Lower leg skin (tissue), 4 donors: ENCODE measurements at regions of chr1 and their contacts with region 1.

Region 1: GRCh38 chr1:202184750-202185460 is 8.7 kb upstream of the LGR6 start:
- DNase-seq: peak; percentile 62 to 93
- H3K4me3 ChIP-seq: no peak overlapping the region
- CTCF ChIP-seq: no peak
- POLR2A ChIP-seq: no peak

Region 2: GRCh38 chr1:202315576-202316168 is 130.8 kb after region 1 on chr1:
- intact Hi-C with region 1: loop called (anchors 5 kb)
- DNase-seq: peak; percentile 49 to 93
- H3K4me3 ChIP-seq: no peak overlapping the region
- CTCF ChIP-seq: peak in 1 of 3 donors; percentile 81
- POLR2A ChIP-seq: no peak

Region 3: DNA sequence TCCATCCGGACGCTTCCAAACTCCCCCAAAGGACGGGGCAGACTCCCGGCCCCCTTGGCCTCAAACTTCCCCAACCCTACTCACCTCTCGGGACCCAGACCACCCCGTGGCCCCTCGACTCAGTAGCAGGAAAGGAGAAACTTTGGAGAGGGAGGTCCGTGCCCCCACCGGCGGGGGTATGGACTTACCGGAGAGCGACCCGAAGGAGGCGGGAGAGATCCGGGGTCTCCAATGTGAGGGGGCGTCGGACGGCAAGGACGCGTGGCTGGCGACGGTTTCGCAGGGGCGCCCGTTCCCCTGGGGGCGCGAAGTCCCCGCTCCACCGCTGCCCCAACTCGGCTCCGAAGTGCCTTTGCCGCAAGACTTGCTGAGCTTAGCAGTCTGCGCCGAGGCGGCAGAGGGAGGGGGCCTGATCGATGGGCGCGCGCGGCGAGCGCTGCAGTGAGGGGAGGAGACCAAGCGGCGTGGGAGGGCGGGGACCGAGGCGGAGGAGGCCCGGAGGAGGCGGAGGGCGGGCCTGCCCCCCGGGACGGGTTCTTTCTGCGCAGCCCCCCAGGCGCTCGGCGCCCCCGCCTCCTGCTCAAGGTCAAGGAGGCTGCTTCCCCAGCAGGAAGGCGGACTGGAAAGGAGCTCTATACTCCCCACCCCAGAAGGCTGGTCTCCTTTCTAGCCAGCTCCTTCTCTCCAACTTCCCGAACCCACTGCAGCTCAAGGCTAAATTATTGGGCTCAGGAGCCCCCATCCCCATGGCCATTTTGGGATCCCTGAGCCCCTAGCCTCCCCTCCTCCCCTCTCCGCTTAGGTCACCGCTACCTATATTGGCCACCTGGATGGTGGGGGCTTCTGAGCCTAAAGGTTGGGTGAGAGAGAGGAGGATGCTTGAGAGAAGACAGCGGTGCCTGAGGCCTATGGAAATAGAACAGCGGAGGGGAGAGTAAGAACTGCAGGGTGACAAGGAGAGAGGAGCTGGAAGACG is 525.5 kb after region 1 on chr1 and contains the start of gene SYT2:
- intact Hi-C with region 1: loop called (anchors 10 kb)
- DNase-seq: peak in 1 of 2 donors; percentile 82
- H3K4me3 ChIP-seq: no peak within 1 kb of the TSS
- CTCF ChIP-seq: no peak
- POLR2A ChIP-seq: no peak
- total RNA-seq, gene SYT2: not detected